ENCODE measurements at regions of chr11 and their contacts with region 1.

Region 1: GRCh38 chr11:133834682-133835592 is 10.4 kb downstream of the SPATA19 start:
- DNase-seq: peak; percentile 70
- H3K4me3 Mint-ChIP-seq: no peak overlapping the region
- H3K27ac Mint-ChIP-seq: no peak overlapping the region
- H3K4me1 Mint-ChIP-seq: no peaks in the 10 kb centered on the region
- H3K27me3 Mint-ChIP-seq: no peaks in the 10 kb centered on the region
- CTCF ChIP-seq: peak; percentile 69

Region 2: DNA sequence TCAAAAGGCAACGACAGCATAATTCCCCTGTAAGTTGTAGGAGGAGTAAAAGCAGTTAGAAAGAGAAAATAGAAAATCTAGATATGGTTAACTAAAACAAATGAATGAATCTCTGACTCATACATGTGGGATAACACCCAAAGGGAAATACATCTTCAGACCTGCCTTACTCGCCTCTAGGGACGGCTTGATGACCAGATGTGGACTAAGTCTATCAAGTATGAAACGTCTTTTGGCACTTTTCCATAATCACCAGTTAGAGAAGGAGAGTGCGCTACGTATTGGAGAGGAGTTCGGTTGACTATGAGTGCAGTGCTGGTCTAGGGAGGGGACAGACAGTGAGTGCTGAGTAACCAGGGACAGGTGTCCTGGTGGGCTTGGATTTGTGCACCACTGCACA is 762.6 kb before region 1 on chr11:
- CTCF ChIA-PET with region 1: interaction called, 111 read pairs
- POLR2A ChIA-PET with region 1: interaction called, 3 read pairs
- intact Hi-C with region 1: no loop called
- DNase-seq: no peak
- H3K4me3 Mint-ChIP-seq: no peak overlapping the region
- H3K27ac Mint-ChIP-seq: no peak overlapping the region
- H3K4me1 Mint-ChIP-seq: no peaks in the 10 kb centered on the region
- H3K27me3 Mint-ChIP-seq: no peaks in the 10 kb centered on the region
- CTCF ChIP-seq: no peak

Region 3: GRCh38 chr11:133078591-133079404 is 756.1 kb before region 1 on chr11:
- CTCF ChIA-PET with region 1: interaction called, 111 read pairs
- POLR2A ChIA-PET with region 1: interaction called, 3 read pairs
- intact Hi-C with region 1: loop called (anchors 1 kb)
- DNase-seq: no peak
- H3K4me3 Mint-ChIP-seq: no peak overlapping the region
- H3K27ac Mint-ChIP-seq: no peak overlapping the region
- H3K4me1 Mint-ChIP-seq: no peaks in the 10 kb centered on the region
- H3K27me3 Mint-ChIP-seq: no peaks in the 10 kb centered on the region
- CTCF ChIP-seq: peak; percentile 63

Region 4: DNA sequence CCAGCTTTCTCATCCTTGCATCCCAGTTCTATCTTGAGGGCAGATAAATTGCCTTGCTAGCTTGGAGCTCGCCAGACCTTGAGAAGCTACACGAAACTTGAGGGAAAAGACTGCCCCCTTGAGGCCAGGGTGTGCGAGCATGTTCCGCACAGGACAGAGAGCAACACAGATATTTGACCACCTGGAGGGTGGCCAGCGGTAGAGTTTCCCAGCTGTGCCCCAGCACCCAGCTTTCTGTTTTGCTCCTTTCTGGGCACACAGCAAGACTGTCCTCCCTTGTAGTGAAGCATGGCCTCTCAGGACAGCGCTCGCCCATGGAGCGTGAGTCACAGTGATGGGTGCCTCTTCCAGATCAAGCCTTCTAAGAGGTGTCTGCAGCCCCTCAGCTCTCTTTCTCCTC is 13.2 kb before region 1 on chr11:
- CTCF ChIA-PET with region 1: interaction called, 38 read pairs
- POLR2A ChIA-PET with region 1: no interaction called
- intact Hi-C with region 1: no loop called
- DNase-seq: peak; percentile 36
- H3K4me3 Mint-ChIP-seq: no peak overlapping the region
- H3K27ac Mint-ChIP-seq: no peak overlapping the region
- H3K4me1 Mint-ChIP-seq: peaks cover 6% of the 10 kb centered on the region
- H3K27me3 Mint-ChIP-seq: peaks cover 20% of the 10 kb centered on the region
- CTCF ChIP-seq: peak; percentile 63

Region 5: GRCh38 chr11:133951327-133952198 is 116.6 kb after region 1 on chr11:
- CTCF ChIA-PET with region 1: no interaction called
- POLR2A ChIA-PET with region 1: no interaction called
- intact Hi-C with region 1: no loop called
- DNase-seq: no peak
- H3K4me3 Mint-ChIP-seq: peak overlapping the region; percentile 65
- H3K27ac Mint-ChIP-seq: peak overlapping the region; percentile 78
- H3K4me1 Mint-ChIP-seq: peaks cover 46% of the 10 kb centered on the region
- H3K27me3 Mint-ChIP-seq: no peaks in the 10 kb centered on the region
- CTCF ChIP-seq: no peak

Region 6: DNA sequence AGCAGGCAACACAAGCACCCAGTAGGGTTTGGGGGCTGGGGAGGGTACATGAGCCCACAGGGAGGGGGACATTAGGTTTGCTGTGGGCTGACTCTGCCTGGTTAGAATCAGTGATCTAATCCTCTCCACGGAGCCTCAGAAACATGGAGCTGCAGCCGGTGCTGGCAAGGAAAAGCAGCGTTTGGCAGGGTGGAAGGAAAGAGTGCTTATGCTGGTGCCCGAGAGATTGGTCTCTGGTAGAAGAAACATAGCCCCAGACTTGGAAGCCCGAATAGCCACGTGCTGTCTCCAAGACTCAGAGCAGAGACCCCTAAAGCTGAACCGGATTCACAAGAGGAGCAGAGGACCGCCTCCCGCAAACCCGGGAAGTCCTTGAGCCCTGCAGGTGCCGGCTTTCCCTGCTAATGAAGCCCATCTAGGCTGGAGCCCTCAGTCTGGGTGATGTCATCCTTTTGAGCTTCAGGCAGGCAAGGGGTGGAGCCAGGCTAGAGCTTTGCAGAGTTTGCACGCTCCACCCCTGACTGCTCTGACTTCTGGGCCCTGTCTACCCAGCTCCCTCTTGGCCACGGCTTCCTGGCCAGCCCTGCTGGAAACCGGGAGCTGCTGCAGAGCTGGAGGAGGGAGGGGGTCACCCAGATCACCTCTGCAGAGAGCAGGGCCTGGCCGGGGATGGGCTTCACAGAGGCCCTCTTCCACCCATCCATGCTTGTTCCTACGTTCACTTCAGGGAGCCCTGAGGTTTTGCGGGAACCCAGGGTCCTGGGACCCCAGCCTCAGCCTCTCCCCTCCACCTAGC is 199.0 kb after region 1 on chr11:
- CTCF ChIA-PET with region 1: no interaction called
- POLR2A ChIA-PET with region 1: no interaction called
- intact Hi-C with region 1: no loop called
- DNase-seq: peak; percentile 86
- H3K4me3 Mint-ChIP-seq: peak overlapping the region; percentile 58
- H3K27ac Mint-ChIP-seq: peak overlapping the region; percentile 76
- H3K4me1 Mint-ChIP-seq: peaks cover 36% of the 10 kb centered on the region
- H3K27me3 Mint-ChIP-seq: no peaks in the 10 kb centered on the region
- CTCF ChIP-seq: no peak

Region 7: DNA sequence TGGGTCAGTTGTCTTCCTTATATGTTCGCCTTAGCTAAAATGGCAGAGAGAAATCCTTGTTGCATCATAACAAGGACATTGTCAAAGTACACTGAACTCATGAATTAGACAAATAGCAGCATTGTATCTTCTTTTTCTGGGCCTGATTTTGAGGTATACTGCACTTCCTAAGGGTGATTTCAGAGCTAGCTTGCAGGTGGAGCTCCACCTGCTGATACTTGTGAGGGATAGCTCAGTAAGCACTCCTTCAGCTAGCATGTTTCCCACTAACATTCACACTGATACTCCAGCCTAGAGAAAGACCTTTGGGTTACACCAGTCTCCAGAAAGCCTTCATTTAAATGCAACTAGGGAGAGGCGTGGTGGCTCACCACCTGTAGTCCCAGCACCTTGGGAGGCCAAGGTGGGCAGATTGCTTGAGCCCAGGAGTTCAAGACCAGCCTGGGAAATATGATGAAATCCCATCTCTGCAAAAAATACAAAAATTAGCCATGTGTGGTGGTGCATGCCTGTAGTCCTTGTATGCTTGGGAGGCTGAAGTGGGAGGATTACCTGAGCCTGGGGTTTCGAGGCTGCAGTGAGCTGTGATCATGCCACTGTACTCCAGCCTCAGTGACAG is 263.7 kb after region 1 on chr11:
- CTCF ChIA-PET with region 1: no interaction called
- POLR2A ChIA-PET with region 1: no interaction called
- intact Hi-C with region 1: no loop called
- DNase-seq: peak; percentile 14
- H3K4me3 Mint-ChIP-seq: no peak overlapping the region
- H3K27ac Mint-ChIP-seq: no peak overlapping the region
- H3K4me1 Mint-ChIP-seq: no peaks in the 10 kb centered on the region
- H3K27me3 Mint-ChIP-seq: peaks cover 23% of the 10 kb centered on the region
- CTCF ChIP-seq: peak; percentile 41